ENCODE measurements at regions of chr11 and their contacts with region 1.

Region 1: GRCh38 chr11:131924457-131925201 is 554.2 kb downstream of the NTM start:
- DNase-seq: no peak
- ATAC-seq: no peak
- H3K4me3 ChIP-seq: no peak overlapping the region
- H3K27ac ChIP-seq: no peak overlapping the region
- H3K4me1 ChIP-seq: peaks cover 0 to 12% (median 4%) of the 10 kb centered on the region in 9 donors
- H3K27me3 ChIP-seq: peaks cover 0 to 9% (median 0%) of the 10 kb centered on the region in 7 donors
- CTCF ChIP-seq: no peak

Region 2: DNA sequence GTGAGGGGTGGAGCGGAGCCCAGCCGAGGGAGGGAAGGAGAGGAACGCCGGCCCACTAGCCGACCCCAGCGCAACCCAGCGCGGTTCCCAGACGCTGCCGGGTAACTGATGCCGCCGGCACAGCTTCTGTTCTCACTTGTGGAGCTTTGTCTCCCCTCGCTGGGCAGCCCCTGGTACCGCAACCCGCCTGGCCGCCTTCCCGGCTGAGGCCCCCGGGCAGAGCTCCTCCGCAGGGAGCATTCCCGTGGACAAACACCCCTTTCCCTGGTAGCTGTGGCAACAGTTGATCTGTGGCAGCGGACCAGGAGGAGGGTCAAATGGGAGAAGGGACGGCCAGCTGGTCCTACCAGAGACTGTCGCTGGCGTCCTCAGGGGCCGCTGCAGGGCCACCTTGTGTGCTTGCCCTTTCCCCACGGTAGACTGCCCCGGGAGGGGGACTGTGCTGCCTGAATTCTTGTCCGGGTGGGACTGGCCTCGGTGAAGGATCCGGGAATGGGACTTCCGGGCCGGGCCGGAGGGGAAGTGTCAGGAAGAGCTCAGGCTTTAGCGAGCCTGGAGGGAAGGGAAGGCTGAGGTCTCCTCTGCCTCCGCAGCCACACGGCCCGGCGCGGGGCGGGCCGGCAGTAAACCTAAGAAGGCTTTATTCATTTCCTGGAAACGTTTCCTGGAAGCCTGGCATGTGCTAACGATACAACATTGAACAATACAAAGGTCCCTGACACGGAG is 1139.7 kb after region 1 on chr11:
- intact Hi-C with region 1: loop called in 1 of 10 experiments (anchors 5 kb)
- DNase-seq: peak; percentile 69 to 72
- ATAC-seq: peak; percentile 89 to 97 (median 96)
- H3K4me3 ChIP-seq: peak overlapping the region; percentile 43 to 74 (median 59)
- H3K27ac ChIP-seq: peak overlapping the region; percentile 2 to 84 (median 74)
- H3K4me1 ChIP-seq: peaks cover 0 to 15% (median 5%) of the 10 kb centered on the region in 9 donors
- H3K27me3 ChIP-seq: peaks cover under 1 to 26% (median 10%) of the 10 kb centered on the region in 7 donors
- CTCF ChIP-seq: peak; percentile 32 to 76 (median 70)